ENCODE measurements at regions of chr17 and their contacts with region 1.

Region 1: GRCh38 chr17:45235416-45236281 is 14.0 kb downstream of the FMNL1 start:
- DNase-seq: peak; percentile 77
- H3K4me3 ChIP-seq: no peak overlapping the region
- H3K27ac ChIP-seq: no peak overlapping the region
- H3K4me1 ChIP-seq: no peaks in the 10 kb centered on the region
- H3K27me3 ChIP-seq: peaks cover 4 to 5% of the 10 kb centered on the region in 2 experiments
- CTCF ChIP-seq: peak; percentile 82 to 87
- POLR2A ChIP-seq: no peak

Region 2: DNA sequence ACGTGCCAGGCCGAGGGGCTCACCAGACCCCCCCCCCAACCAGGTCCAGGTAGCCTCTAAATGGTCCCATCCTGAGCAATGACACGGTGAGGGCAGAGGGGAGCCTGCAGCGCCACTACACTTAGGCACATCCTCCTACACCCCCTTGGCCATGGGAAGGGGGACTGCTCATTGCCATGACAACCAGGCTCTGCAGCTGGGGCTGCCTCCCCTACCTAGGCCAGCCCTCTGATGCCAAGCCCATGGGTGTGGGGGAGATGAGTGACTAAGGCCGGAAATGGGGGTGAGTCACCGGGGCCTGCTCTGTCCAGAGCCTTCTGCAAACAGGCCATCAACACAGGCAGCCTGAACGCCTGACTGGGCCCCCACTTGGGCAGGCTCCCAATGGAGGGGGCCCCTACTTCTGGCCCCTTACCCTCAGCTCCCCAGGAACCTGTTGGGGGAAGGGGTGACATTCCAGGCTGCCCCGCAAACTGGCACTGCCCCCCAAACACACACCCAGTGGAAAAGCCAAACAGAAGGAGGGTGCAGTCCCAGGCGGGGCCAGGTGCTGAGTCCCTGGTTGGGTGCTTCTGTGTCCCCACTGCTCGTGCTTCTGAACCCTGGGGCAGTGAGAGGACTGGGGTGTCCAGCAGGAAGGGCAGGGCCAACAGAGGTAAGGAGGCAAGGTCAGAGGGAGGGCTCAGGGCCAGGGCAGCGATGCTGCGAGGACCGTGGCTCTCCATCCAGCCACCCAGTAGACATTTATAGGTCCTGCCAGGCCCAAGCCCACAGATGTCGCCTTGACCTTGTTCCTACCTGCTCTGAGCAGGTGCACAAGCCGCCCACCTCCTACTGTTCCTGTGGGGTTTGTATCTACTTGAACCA is 111.5 kb before region 1 on chr17:
- CTCF ChIA-PET with region 1: no interaction called
- POLR2A ChIA-PET with region 1: no interaction called
- dilution Hi-C with region 1: no loop called
- intact Hi-C with region 1: no loop called
- DNase-seq: peak; percentile 90
- H3K4me3 ChIP-seq: no peak overlapping the region
- H3K27ac ChIP-seq: peak overlapping the region; percentile 59
- H3K4me1 ChIP-seq: peaks cover 30% of the 10 kb centered on the region
- H3K27me3 ChIP-seq: no peaks in the 10 kb centered on the region
- CTCF ChIP-seq: no peak
- POLR2A ChIP-seq: peak; percentile 34

Region 3: GRCh38 chr17:45148183-45149036 is 87.2 kb before region 1 on chr17 and contains the start of gene HEXIM1:
- CTCF ChIA-PET with region 1: interaction called, 12 read pairs
- POLR2A ChIA-PET with region 1: no interaction called
- dilution Hi-C with region 1: no loop called
- intact Hi-C with region 1: no loop called
- DNase-seq: peak; percentile 100
- H3K4me3 ChIP-seq: peak within 1 kb of the TSS; percentile 68 to 95 (median 90)
- H3K27ac ChIP-seq: peak within 1 kb of the TSS; percentile 97
- H3K4me1 ChIP-seq: peaks cover 24% of the 10 kb centered on the region
- H3K27me3 ChIP-seq: no peaks in the 10 kb centered on the region
- CTCF ChIP-seq: no peak
- POLR2A ChIP-seq: peak; percentile 100
- total RNA-seq, gene HEXIM1: 20.0 and 20.6 TPM in 2 replicates

Region 4: DNA sequence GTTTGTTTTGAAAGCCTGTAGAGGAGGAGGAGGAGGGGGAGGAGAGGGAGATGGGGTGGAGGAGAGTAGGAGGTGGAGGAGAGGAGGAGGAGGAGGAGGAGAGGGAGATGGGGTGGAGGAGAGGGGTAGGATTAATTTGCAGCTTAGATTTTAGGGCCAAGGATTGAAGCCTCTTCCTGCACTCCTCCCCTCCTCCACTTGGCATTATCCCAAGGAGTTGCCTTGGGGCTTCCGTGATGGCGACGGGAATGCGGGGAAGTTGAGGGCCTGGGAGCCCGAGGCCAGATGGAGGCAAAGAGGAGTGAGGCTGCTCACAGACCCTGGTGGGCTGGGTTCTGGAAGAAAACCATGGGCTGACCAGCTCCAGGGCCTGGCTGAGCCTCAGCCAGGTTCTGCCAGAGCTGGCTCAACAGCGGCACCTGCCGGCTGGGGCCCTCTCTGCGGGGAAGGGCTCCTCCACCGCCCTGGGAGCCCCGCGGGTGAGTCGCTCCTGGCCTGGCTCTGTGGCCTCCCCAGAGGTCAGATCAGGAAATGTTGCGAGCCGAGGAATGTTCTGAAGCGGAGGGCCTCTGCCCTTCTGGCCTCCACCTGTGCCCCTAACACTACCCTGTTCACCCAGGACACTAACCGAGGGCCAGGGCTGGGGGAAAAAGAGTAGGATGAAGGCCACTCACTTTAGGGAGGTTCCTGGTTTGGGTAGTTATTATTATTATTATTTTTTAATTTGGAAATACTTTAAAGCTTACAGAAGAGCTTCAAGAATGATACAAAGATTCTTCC is 37.9 kb before region 1 on chr17:
- CTCF ChIA-PET with region 1: interaction called, 10 read pairs
- POLR2A ChIA-PET with region 1: no interaction called
- dilution Hi-C with region 1: no loop called
- intact Hi-C with region 1: no loop called
- DNase-seq: peak; percentile 86
- H3K4me3 ChIP-seq: no peak overlapping the region
- H3K27ac ChIP-seq: no peak overlapping the region
- H3K4me1 ChIP-seq: peaks cover 2% of the 10 kb centered on the region
- H3K27me3 ChIP-seq: no peaks in the 10 kb centered on the region
- CTCF ChIP-seq: peak; percentile 99 to 100
- POLR2A ChIP-seq: no peak

Region 5: GRCh38 chr17:45256114-45256966 is 20.7 kb after region 1 on chr17:
- CTCF ChIA-PET with region 1: interaction called, 13 read pairs
- POLR2A ChIA-PET with region 1: no interaction called
- dilution Hi-C with region 1: no loop called
- intact Hi-C with region 1: no loop called
- DNase-seq: no peak
- H3K4me3 ChIP-seq: no peak overlapping the region
- H3K27ac ChIP-seq: no peak overlapping the region
- H3K4me1 ChIP-seq: no peaks in the 10 kb centered on the region
- H3K27me3 ChIP-seq: peaks cover 0 to 2% of the 10 kb centered on the region in 2 experiments
- CTCF ChIP-seq: peak in 1 of 2 donors; percentile 27
- POLR2A ChIP-seq: no peak

Region 6: DNA sequence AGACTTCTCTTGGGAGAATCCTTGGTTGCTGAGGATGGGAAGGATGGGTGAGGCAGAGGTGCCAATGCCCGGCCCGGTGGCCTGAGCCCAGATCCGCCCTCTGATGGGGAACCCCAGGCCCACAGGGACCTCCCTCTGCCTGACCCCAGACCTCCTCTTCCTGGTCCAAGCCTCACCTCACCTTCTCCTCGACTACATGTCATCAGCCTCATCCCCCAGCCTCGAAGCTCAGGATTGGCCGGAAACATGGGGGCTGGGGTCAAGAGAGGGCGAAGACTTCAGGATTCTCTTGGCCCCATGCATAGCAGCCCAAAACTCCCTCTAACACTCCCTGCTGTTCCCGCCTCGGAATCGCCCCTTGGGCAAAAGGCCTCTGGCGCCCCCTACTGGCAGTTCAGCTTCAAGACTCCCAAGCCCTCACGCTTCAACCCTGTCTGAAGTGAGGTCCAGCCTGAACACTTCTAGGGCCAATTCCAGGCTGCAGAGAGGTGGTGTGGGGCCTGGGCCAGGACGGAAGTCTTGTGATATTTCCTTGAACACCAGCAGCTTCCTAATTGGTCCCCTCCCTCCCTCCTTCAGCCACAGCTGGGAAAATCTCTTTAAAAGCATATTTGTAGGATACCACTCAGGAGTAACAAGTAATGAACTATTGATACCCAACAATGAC is 149.8 kb after region 1 on chr17:
- CTCF ChIA-PET with region 1: interaction called, 12 read pairs
- POLR2A ChIA-PET with region 1: no interaction called
- dilution Hi-C with region 1: no loop called
- intact Hi-C with region 1: loop called (anchors 1 kb)
- DNase-seq: peak; percentile 77
- H3K4me3 ChIP-seq: no peak overlapping the region
- H3K27ac ChIP-seq: no peak overlapping the region
- H3K4me1 ChIP-seq: no peaks in the 10 kb centered on the region
- H3K27me3 ChIP-seq: peaks cover 0 to 6% of the 10 kb centered on the region in 2 experiments
- CTCF ChIP-seq: peak; percentile 94 to 97
- POLR2A ChIP-seq: no peak

Region 7: DNA sequence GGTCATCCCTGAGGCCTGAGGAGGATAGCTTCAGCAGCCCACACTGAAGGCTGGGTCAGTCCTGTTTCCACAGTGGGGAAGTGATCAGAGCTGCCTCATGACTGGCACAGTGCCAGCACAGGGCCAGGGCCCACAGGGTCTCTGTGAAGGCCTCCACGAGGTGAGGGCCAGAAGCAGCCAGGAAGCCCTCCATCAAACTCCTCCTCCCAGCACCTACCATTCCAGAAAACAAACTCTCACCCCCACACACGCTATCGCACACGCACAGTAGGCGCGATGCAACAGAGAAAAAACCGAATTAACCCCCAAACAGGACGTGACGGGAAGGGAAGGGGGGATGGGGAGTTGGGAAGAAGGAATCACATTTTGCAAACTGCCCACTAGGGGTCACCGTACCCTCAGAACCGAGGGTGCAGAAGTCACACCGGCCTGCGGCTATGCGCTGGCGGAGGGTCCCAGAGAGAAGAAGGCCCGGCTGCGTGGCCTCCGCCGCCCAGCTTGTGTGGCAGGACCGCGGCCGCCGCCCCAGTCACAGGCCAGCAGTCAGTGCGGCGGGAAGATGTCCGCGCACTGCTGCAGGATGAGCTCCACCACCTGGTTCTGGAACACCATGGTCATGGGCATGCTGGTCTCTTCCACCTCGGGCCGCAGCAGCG is 159.4 kb after region 1 on chr17:
- CTCF ChIA-PET with region 1: interaction called, 14 read pairs
- POLR2A ChIA-PET with region 1: no interaction called
- dilution Hi-C with region 1: no loop called
- intact Hi-C with region 1: no loop called
- DNase-seq: peak; percentile 78
- H3K4me3 ChIP-seq: no peak overlapping the region
- H3K27ac ChIP-seq: no peak overlapping the region
- H3K4me1 ChIP-seq: no peaks in the 10 kb centered on the region
- H3K27me3 ChIP-seq: no peaks in the 10 kb centered on the region
- CTCF ChIP-seq: peak; percentile 62 to 78
- POLR2A ChIP-seq: no peak

Measured in endothelial cell of umbilical vein (primary cell).